ENCODE measurements at regions of chr9 and their contacts with region 1.

Region 1: GRCh38 chr9:107269681-107270080 is 13.4 kb upstream of the RAD23B start:
- DNase-seq: peak in 1 of 2 experiments; percentile 45
- H3K4me3 ChIP-seq: no peak overlapping the region
- H3K4me3 Mint-ChIP-seq: no peak overlapping the region
- H3K27ac Mint-ChIP-seq: peak overlapping the region; percentile 24
- H3K4me1 ChIP-seq: peaks cover 24% of the 10 kb centered on the region
- H3K4me1 Mint-ChIP-seq: peaks cover 20% of the 10 kb centered on the region
- H3K27me3 ChIP-seq: no peaks in the 10 kb centered on the region
- H3K27me3 Mint-ChIP-seq: no peaks in the 10 kb centered on the region
- CTCF ChIP-seq: no peak

Region 2: GRCh38 chr9:107067739-107068416 is 201.8 kb before region 1 on chr9:
- CTCF ChIA-PET with region 1: no interaction called
- POLR2A ChIA-PET with region 1: no interaction called
- intact Hi-C with region 1: no loop called
- DNase-seq: peak; percentile 63 to 76
- H3K4me3 ChIP-seq: no peak overlapping the region
- H3K4me3 Mint-ChIP-seq: peak overlapping the region; percentile 41
- H3K27ac Mint-ChIP-seq: peak overlapping the region; percentile 21
- H3K4me1 ChIP-seq: peaks cover 31% of the 10 kb centered on the region
- H3K4me1 Mint-ChIP-seq: peaks cover 25% of the 10 kb centered on the region
- H3K27me3 ChIP-seq: no peaks in the 10 kb centered on the region
- H3K27me3 Mint-ChIP-seq: no peaks in the 10 kb centered on the region
- CTCF ChIP-seq: no peak

Region 3: DNA sequence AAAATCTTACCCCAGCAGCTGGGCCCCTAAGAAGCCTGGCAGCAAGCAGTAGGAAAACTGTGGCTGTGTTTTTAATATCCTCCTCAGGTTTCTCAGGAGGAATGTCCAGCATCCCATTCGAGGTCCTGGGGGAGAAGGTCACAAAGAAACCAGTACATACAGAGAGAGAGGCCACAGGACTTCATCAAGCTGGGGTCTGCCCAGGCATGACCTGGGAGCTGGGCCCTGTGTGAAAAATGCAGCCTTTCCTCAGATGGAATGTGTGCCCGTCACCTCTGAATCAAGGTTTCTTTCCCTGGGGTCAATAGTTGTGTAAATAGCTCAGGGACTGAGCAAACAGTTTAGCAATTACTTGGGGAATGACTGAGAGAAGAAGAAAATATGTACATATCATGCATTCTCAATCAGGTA is 20.5 kb before region 1 on chr9:
- CTCF ChIA-PET with region 1: interaction called, 3 read pairs
- POLR2A ChIA-PET with region 1: interaction called, 3 read pairs
- intact Hi-C with region 1: loop called (anchors 2 kb)
- DNase-seq: peak; percentile 83 to 93
- H3K4me3 ChIP-seq: no peak overlapping the region
- H3K4me3 Mint-ChIP-seq: peak overlapping the region; percentile 56
- H3K27ac Mint-ChIP-seq: peak overlapping the region; percentile 75
- H3K4me1 ChIP-seq: peaks cover 69% of the 10 kb centered on the region
- H3K4me1 Mint-ChIP-seq: peaks cover 44% of the 10 kb centered on the region
- H3K27me3 ChIP-seq: no peaks in the 10 kb centered on the region
- H3K27me3 Mint-ChIP-seq: no peaks in the 10 kb centered on the region
- CTCF ChIP-seq: no peak

Region 4: GRCh38 chr9:107587191-107587963 is 317.7 kb after region 1 on chr9:
- CTCF ChIA-PET with region 1: no interaction called
- POLR2A ChIA-PET with region 1: no interaction called
- intact Hi-C with region 1: no loop called
- DNase-seq: peak; percentile 62 to 80
- H3K4me3 ChIP-seq: peak overlapping the region; percentile 28
- H3K4me3 Mint-ChIP-seq: peak overlapping the region; percentile 72
- H3K27ac Mint-ChIP-seq: peak overlapping the region; percentile 55
- H3K4me1 ChIP-seq: peaks cover 21% of the 10 kb centered on the region
- H3K4me1 Mint-ChIP-seq: peaks cover 44% of the 10 kb centered on the region
- H3K27me3 ChIP-seq: no peaks in the 10 kb centered on the region
- H3K27me3 Mint-ChIP-seq: no peaks in the 10 kb centered on the region
- CTCF ChIP-seq: no peak

Region 5: DNA sequence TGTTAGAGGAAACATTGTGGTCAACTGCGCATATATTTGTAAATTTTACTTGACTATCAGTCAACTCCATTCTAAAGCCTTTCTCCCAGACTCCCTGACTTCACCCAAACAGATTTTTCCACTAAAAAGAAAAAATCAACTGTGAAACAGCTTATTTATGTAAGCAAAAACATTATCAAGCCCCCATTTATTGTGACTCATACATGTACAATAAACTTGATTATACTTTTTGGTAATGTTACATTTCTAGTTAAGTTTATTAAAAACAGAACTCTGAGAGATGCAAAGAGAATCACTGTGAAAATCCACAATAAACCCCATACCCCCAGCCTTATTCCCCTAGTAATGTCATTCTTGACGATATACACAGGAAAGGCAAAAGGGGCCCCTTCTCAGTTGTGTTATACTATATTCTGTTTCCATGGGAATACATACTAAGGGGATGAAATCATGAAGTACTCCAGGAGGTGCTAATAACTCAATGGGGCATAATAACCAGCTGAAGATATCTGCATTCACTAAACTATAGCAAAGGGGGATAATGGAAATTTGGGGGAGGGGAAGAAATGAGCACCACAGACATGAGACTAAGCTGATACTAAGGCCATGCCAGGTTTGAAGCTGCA is 970.1 kb after region 1 on chr9:
- CTCF ChIA-PET with region 1: no interaction called
- POLR2A ChIA-PET with region 1: no interaction called
- intact Hi-C with region 1: no loop called
- DNase-seq: no peak
- H3K4me3 ChIP-seq: no peak overlapping the region
- H3K4me3 Mint-ChIP-seq: no peak overlapping the region
- H3K27ac Mint-ChIP-seq: no peak overlapping the region
- H3K4me1 ChIP-seq: no peaks in the 10 kb centered on the region
- H3K4me1 Mint-ChIP-seq: no peaks in the 10 kb centered on the region
- H3K27me3 ChIP-seq: no peaks in the 10 kb centered on the region
- H3K27me3 Mint-ChIP-seq: no peaks in the 10 kb centered on the region
- CTCF ChIP-seq: no peak

Measured in Caco-2 (cell line).